WTC11 (cell line): ENCODE measurements at regions of chr3 and their contacts with region 1.

Region 1: GRCh38 chr3:137105277-137105977 is 147.6 kb downstream of the IL20RB start:
- DNase-seq: peak; percentile 28
- ATAC-seq: peak; percentile 77
- H3K4me3 Mint-ChIP-seq: no peak overlapping the region
- H3K27ac Mint-ChIP-seq: no peak overlapping the region
- H3K4me1 Mint-ChIP-seq: peaks cover 38% of the 10 kb centered on the region
- H3K27me3 Mint-ChIP-seq: no peaks in the 10 kb centered on the region
- CTCF ChIP-seq: peak; percentile 47; the same call in 1 of the 2 replicates

Region 2: GRCh38 chr3:137032465-137033120 is 72.8 kb before region 1 on chr3:
- CTCF ChIA-PET with region 1: interaction called, 33 read pairs
- POLR2A ChIA-PET with region 1: no interaction called
- DNase-seq: peak; percentile 98
- ATAC-seq: peak; percentile 75
- H3K4me3 Mint-ChIP-seq: peak overlapping the region; percentile 70
- H3K27ac Mint-ChIP-seq: 0 out of 2 replicates have a peak overlapping the region, but pooled peaks have one; percentile 11
- H3K4me1 Mint-ChIP-seq: peaks cover 29% of the 10 kb centered on the region
- H3K27me3 Mint-ChIP-seq: peaks cover 30% of the 10 kb centered on the region
- CTCF ChIP-seq: peak; percentile 96

Region 3: GRCh38 chr3:137121704-137122314 is 16.4 kb after region 1 on chr3:
- CTCF ChIA-PET with region 1: interaction called, 32 read pairs
- POLR2A ChIA-PET with region 1: no interaction called
- DNase-seq: peak; percentile 58
- ATAC-seq: peak; percentile 95
- H3K4me3 Mint-ChIP-seq: no peak overlapping the region
- H3K27ac Mint-ChIP-seq: no peak overlapping the region
- H3K4me1 Mint-ChIP-seq: peaks cover 2% of the 10 kb centered on the region
- H3K27me3 Mint-ChIP-seq: no peaks in the 10 kb centered on the region
- CTCF ChIP-seq: peak; percentile 65

Region 4: DNA sequence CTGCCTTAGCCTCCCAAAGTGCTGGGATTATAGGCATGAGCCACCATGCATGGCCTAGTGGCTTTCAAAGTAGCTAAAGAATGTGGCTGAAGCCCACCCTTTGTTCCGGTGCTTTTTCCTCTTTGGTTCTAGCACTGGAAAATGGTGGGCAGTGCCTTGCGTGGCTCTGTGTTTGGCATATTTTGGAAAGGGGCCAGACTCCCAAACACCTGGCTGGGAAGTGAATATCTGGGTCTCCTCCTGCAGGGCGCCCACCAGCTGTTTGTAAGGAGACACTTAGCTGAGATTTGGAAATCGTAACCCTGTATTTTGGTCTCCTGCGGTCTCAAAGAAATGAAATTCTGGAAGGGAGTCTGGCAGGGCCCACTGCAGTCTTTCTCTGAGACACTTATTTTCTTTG is 188.7 kb after region 1 on chr3:
- CTCF ChIA-PET with region 1: interaction called, 25 read pairs
- POLR2A ChIA-PET with region 1: no interaction called
- DNase-seq: no peak
- ATAC-seq: peak; percentile 18
- H3K4me3 Mint-ChIP-seq: no peak overlapping the region
- H3K27ac Mint-ChIP-seq: peak overlapping the region; percentile 30; the same call in 1 of the 2 replicates
- H3K4me1 Mint-ChIP-seq: peaks cover 31% of the 10 kb centered on the region
- H3K27me3 Mint-ChIP-seq: peaks cover 12% of the 10 kb centered on the region; the same call in 1 of the 2 replicates
- CTCF ChIP-seq: no peak

Region 5: DNA sequence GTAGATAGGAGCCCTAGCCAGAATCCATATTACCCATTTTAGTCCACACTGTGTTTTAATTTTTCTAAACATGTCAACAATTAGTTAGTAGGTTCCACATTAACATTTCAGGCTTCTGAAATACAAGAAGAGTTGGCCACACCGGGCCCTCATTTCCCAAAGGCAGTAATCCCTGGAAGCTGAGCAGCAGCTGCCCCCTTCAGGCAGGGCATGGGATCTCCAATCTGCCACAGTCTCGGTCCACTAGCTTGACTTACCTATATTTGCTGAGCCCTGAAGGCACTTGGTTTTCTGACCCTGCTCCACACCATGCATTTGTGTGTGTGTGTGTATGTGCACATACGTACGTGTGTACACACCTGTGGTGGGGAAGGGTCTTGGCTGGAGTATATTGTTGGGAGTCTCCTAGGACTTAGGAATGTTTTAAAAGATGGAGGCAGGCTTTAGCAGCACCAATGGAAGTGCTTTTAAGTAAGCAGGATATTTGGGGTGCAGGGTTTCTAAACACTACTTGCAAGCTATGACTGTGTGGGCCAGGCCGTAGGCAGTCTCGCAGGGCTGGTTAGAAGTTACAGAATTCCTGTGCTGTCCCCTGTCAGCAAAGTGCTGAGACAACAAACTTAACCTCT is 587.5 kb after region 1 on chr3:
- CTCF ChIA-PET with region 1: interaction called, 15 read pairs
- POLR2A ChIA-PET with region 1: no interaction called
- DNase-seq: peak; percentile 80
- ATAC-seq: peak; percentile 90
- H3K4me3 Mint-ChIP-seq: no peak overlapping the region
- H3K27ac Mint-ChIP-seq: no peak overlapping the region
- H3K4me1 Mint-ChIP-seq: peaks cover 16% of the 10 kb centered on the region
- H3K27me3 Mint-ChIP-seq: no peaks in the 10 kb centered on the region
- CTCF ChIP-seq: peak; percentile 70

Region 6: GRCh38 chr3:137970914-137971831 is 865.7 kb after region 1 on chr3:
- CTCF ChIA-PET with region 1: interaction called, 12 read pairs
- POLR2A ChIA-PET with region 1: no interaction called
- DNase-seq: peak; percentile 92
- ATAC-seq: peak; percentile 99
- H3K4me3 Mint-ChIP-seq: no peak overlapping the region
- H3K27ac Mint-ChIP-seq: no peak overlapping the region
- H3K4me1 Mint-ChIP-seq: peaks cover 4% of the 10 kb centered on the region; the same call in 1 of the 2 replicates
- H3K27me3 Mint-ChIP-seq: peaks cover 4% of the 10 kb centered on the region
- CTCF ChIP-seq: peak; percentile 81